RWPE1 (cell line): ENCODE measurements at regions of chr1 and their contacts with region 1.

Region 1: GRCh38 chr1:65309304-65310077 is at the start of gene DNAJC6:
- DNase-seq: peak; percentile 64
- H3K27ac ChIP-seq: no peak within 1 kb of the TSS
- CTCF ChIP-seq: no peak

Region 2: DNA sequence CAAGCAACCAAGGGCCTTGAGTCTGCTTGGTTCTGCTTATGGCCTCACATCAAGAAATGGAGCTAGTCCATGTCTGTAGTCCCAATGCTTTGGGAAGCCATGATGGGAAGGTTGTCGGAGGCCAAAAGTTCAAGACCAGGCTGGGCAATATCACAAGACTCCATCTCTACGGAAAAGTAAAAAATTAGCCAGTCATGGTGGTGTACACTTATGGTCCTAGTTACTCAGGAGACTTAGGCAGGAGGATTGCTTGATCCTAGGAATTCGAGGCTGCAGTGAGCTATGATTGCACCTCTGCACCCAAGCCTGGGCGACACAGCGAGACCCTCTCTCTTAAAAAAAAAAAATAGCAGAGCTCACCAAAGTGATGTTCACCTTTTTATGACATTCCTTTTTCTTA is 80.3 kb before region 1 on chr1:
- CTCF ChIA-PET with region 1: interaction called, 10 read pairs
- POLR2A ChIA-PET with region 1: no interaction called
- DNase-seq: no peak
- H3K27ac ChIP-seq: no peak overlapping the region
- CTCF ChIP-seq: no peak